ENCODE measurements at regions of chr3 and their contacts with region 1.

Region 1: GRCh38 chr3:47910777-47911440 is 105.3 kb downstream of the MAP4 start:
- DNase-seq: peak; percentile 58
- H3K4me3 Mint-ChIP-seq: no peak overlapping the region
- H3K27ac Mint-ChIP-seq: peak overlapping the region; percentile 67
- H3K4me1 Mint-ChIP-seq: peaks cover 32% of the 10 kb centered on the region
- H3K27me3 Mint-ChIP-seq: no peaks in the 10 kb centered on the region
- CTCF ChIP-seq: no peak

Region 2: DNA sequence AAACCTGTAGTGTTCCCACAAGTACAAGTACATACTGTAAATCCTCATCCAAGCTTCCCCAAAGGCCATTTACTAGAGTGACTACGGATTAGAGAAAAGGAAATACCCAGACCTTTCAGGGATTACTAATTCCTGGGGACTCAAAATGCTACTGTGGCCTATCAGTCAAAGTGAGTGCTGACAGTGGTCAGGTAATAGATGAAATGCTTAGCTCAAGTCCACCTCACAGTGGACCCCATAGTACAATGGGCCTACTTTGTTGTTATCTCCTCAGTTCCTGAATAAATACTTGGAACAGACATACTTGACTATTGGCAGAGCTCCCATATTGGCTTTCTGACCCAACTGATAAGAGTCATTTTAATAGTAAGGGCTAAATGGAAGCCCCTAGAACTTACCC is 43.7 kb after region 1 on chr3:
- CTCF ChIA-PET with region 1: no interaction called
- intact Hi-C with region 1: loop called (anchors 5 kb)
- DNase-seq: peak; percentile 3
- H3K4me3 Mint-ChIP-seq: no peak overlapping the region
- H3K27ac Mint-ChIP-seq: no peak overlapping the region
- H3K4me1 Mint-ChIP-seq: peaks cover 12% of the 10 kb centered on the region
- H3K27me3 Mint-ChIP-seq: no peaks in the 10 kb centered on the region
- CTCF ChIP-seq: no peak